CD8-positive, alpha-beta T cell (primary cell): ENCODE measurements at regions of chr5 and their contacts with region 1.

Region 1: GRCh38 chr5:101009758-101010519 is 106.9 kb upstream of the ST8SIA4 start:
- DNase-seq: no peak
- ATAC-seq: no peak
- H3K4me3 ChIP-seq: no peak overlapping the region
- H3K4me3 Mint-ChIP-seq: no peak overlapping the region
- H3K27ac ChIP-seq: no peak overlapping the region
- H3K27ac Mint-ChIP-seq: no peak overlapping the region
- H3K4me1 ChIP-seq: no peaks in the 10 kb centered on the region
- H3K4me1 Mint-ChIP-seq: no peaks in the 10 kb centered on the region
- H3K27me3 ChIP-seq: no peaks in the 10 kb centered on the region
- H3K27me3 Mint-ChIP-seq: no peaks in the 10 kb centered on the region
- CTCF ChIP-seq: no peak

Region 2: GRCh38 chr5:100479079-100479688 is 530.8 kb before region 1 on chr5:
- CTCF ChIA-PET with region 1: no interaction called
- POLR2A ChIA-PET with region 1: no interaction called
- intact Hi-C with region 1: loop called in 1 of 2 experiments (anchors 1 kb)
- DNase-seq: peak in 2 of 9 experiments; percentile 32 to 47
- ATAC-seq: no peak
- H3K4me3 ChIP-seq: no peak overlapping the region
- H3K4me3 Mint-ChIP-seq: no peak overlapping the region
- H3K27ac ChIP-seq: no peak overlapping the region
- H3K27ac Mint-ChIP-seq: no peak overlapping the region
- H3K4me1 ChIP-seq: no peaks in the 10 kb centered on the region
- H3K4me1 Mint-ChIP-seq: no peaks in the 10 kb centered on the region
- H3K27me3 ChIP-seq: no peaks in the 10 kb centered on the region
- H3K27me3 Mint-ChIP-seq: no peaks in the 10 kb centered on the region
- CTCF ChIP-seq: peak; percentile 32

Region 3: GRCh38 chr5:101024299-101024698 is 14.4 kb after region 1 on chr5:
- CTCF ChIA-PET with region 1: no interaction called
- POLR2A ChIA-PET with region 1: no interaction called
- intact Hi-C with region 1: no loop called
- DNase-seq: no peak
- ATAC-seq: no peak
- H3K4me3 ChIP-seq: no peak overlapping the region
- H3K4me3 Mint-ChIP-seq: no peak overlapping the region
- H3K27ac ChIP-seq: no peak overlapping the region
- H3K27ac Mint-ChIP-seq: no peak overlapping the region
- H3K4me1 ChIP-seq: no peaks in the 10 kb centered on the region
- H3K4me1 Mint-ChIP-seq: no peaks in the 10 kb centered on the region
- H3K27me3 ChIP-seq: no peaks in the 10 kb centered on the region
- H3K27me3 Mint-ChIP-seq: no peaks in the 10 kb centered on the region
- CTCF ChIP-seq: no peak